ENCODE measurements at regions of chr10 and their contacts with region 1.

Region 1: GRCh38 chr10:15209827-15210509 is 41.5 kb upstream of the NMT2 start:
- DNase-seq: peak; percentile 86
- H3K4me3 ChIP-seq: no peak overlapping the region
- H3K27ac ChIP-seq: no peak overlapping the region
- H3K4me1 ChIP-seq: no peaks in the 10 kb centered on the region
- H3K27me3 ChIP-seq: no peaks in the 10 kb centered on the region
- CTCF ChIP-seq: peak; percentile 84 to 91 (median 85)
- EP300 ChIP-seq: no peak
- POLR2A ChIP-seq: no peak

Region 2: DNA sequence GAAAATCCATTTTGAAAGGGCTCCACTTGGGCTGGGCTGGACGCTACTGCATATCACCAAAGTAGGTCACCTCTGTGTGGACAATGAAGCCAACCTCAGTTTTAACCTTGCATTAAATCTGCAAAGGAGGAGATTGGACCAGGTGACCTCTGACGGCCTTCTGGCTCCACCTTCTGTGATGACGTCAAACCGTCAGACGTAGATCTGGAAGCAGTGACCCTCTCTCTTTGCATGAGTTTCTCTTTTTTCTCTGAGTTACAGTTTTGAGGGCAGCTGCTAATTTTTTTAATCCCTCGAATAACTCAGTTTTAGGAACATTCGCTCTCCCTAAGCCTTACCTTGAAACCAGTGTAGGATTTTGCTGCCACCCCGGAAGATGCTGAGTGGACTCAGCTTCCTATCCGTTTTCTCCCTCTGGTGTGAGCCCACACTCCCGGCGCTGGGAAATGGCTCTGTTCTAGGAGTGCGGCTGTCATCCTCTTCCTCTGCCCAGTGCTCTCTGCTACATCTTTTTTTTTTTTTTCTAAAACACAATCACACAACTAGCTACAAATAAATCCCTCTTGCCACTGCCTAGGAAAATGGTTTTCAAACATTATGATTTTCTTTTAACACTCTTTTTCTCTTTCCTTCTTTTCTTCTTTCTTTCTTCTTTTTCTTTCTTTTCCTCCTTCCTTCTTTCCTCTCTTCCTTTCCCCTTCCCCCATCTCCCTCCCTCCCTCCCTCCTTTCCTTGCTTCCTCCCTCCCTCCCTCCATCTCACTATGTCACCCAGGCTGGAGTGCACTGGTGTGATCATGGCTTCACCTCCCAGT is 13.7 kb before region 1 on chr10:
- in situ Hi-C with region 1: no loop called
- intact Hi-C with region 1: loop called (anchors 1 kb)
- DNase-seq: no peak
- H3K4me3 ChIP-seq: no peak overlapping the region
- H3K27ac ChIP-seq: no peak overlapping the region
- H3K4me1 ChIP-seq: no peaks in the 10 kb centered on the region
- H3K27me3 ChIP-seq: no peaks in the 10 kb centered on the region
- CTCF ChIP-seq: no peak
- EP300 ChIP-seq: no peak
- POLR2A ChIP-seq: no peak

Region 3: GRCh38 chr10:15321431-15322341 is 111.7 kb after region 1 on chr10:
- in situ Hi-C with region 1: no loop called
- intact Hi-C with region 1: no loop called
- DNase-seq: no peak
- H3K4me3 ChIP-seq: no peak overlapping the region
- H3K27ac ChIP-seq: peak overlapping the region in 2 of 4 donors; percentile 17 to 39
- H3K4me1 ChIP-seq: peaks cover 6 to 32% (median 17%) of the 10 kb centered on the region in 4 donors
- H3K27me3 ChIP-seq: no peaks in the 10 kb centered on the region
- CTCF ChIP-seq: no peak
- EP300 ChIP-seq: no peak
- POLR2A ChIP-seq: no peak

Region 4: GRCh38 chr10:15370856-15371701 is 161.1 kb after region 1 on chr10 and contains the start of gene FAM171A1:
- in situ Hi-C with region 1: loop called in 2 of 4 experiments (anchors 10 to 25 kb)
- intact Hi-C with region 1: loop called (anchors 2 kb)
- DNase-seq: peak; percentile 68
- H3K4me3 ChIP-seq: peak within 1 kb of the TSS; percentile 72 to 95 (median 82)
- H3K27ac ChIP-seq: peak within 1 kb of the TSS; percentile 65 to 87 (median 83)
- H3K4me1 ChIP-seq: peaks cover 0 to 22% (median 15%) of the 10 kb centered on the region in 4 donors
- H3K27me3 ChIP-seq: no peaks in the 10 kb centered on the region
- CTCF ChIP-seq: peak in 3 of 5 experiments; percentile 10 to 34 (median 32)
- EP300 ChIP-seq: no peak
- POLR2A ChIP-seq: no peak
- total RNA-seq, gene FAM171A1: 29.2 to 42.2 (median 38.2) TPM

Region 5: GRCh38 chr10:15385552-15386455 is 175.8 kb after region 1 on chr10:
- in situ Hi-C with region 1: loop called in 1 of 4 experiments (anchors 25 kb)
- intact Hi-C with region 1: no loop called
- DNase-seq: no peak
- H3K4me3 ChIP-seq: no peak overlapping the region
- H3K27ac ChIP-seq: peak overlapping the region in 2 of 4 donors; percentile 24 to 31
- H3K4me1 ChIP-seq: peaks cover 0 to 12% (median 0%) of the 10 kb centered on the region in 4 donors
- H3K27me3 ChIP-seq: no peaks in the 10 kb centered on the region
- CTCF ChIP-seq: no peak
- EP300 ChIP-seq: no peak
- POLR2A ChIP-seq: no peak

Measured in transverse colon (tissue), 4 donors.